ENCODE measurements at regions of chr1 and their contacts with region 1.

Region 1: DNA sequence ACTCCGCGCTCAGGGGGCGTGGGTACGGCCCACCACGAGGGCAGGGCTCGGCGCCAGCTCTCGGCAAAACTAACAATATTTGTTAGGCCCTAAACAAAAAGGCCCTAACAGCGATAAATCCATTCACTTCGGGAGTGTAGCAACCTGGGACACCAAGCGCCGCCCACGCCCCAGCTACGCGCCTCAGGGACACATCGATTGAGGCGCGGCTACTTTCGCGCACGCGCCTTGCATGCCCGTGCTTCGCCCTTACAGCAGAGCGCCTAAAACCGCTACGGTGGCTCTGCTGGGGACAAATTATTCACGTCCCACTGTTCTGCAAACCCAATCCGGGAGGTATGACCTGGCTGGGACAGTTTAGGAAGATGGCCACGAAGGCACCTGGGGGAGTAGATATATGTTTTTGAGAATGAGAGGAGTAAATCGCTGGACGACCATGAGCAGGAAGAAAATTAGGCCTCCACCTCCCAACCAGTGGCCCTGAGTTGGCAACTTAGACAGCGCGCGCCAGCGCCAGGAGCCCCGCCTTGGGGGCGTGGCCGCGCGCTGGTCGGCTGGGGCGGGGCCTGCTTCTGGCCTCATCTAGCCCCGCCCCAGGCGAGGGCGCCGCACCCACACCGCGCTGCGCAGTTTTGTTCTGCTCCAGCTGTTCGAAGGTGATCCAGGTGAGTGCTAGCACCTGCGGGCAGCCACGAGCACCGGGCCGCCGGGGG is at the start of gene MGST3:
- DNase-seq: peak; percentile 95 to 98 (median 96)
- H3K4me3 ChIP-seq: peak within 1 kb of the TSS; percentile 70 to 98 (median 84)
- H3K27ac ChIP-seq: peak within 1 kb of the TSS; percentile 87 to 97 (median 94)
- H3K4me1 ChIP-seq: peaks cover 19 to 29% of the 10 kb centered on the region in 2 donors
- H3K27me3 ChIP-seq: no peaks in the 10 kb centered on the region
- CTCF ChIP-seq: no peak
- POLR2A ChIP-seq: peak; percentile 62 to 91
- total RNA-seq, gene MGST3: 193 to 441 (median 254) TPM

Region 2: GRCh38 chr1:165444897-165445370 is 185.9 kb before region 1 on chr1 and contains the start of gene RXRG:
- intact Hi-C with region 1: no loop called
- DNase-seq: peak in 5 of 7 donors; percentile 9 to 60 (median 26)
- H3K4me3 ChIP-seq: peak within 1 kb of the TSS in 1 of 4 donors; percentile 21
- H3K27ac ChIP-seq: no peak within 1 kb of the TSS
- H3K4me1 ChIP-seq: peaks cover 0 to 6% of the 10 kb centered on the region in 2 donors
- H3K27me3 ChIP-seq: peaks cover 19% of the 10 kb centered on the region
- CTCF ChIP-seq: no peak
- POLR2A ChIP-seq: no peak
- total RNA-seq, gene RXRG: 0.17 to 2.4 (median 1.2) TPM in 7 of 9 donors, not detected in the others

Region 3: GRCh38 chr1:165686121-165686970 is 55.6 kb after region 1 on chr1:
- intact Hi-C with region 1: loop called (anchors 10 kb)
- DNase-seq: no peak
- H3K4me3 ChIP-seq: no peak overlapping the region
- H3K27ac ChIP-seq: no peak overlapping the region
- H3K4me1 ChIP-seq: peaks cover 13 to 56% of the 10 kb centered on the region in 2 donors
- H3K27me3 ChIP-seq: no peaks in the 10 kb centered on the region
- CTCF ChIP-seq: no peak
- POLR2A ChIP-seq: no peak

Region 4: DNA sequence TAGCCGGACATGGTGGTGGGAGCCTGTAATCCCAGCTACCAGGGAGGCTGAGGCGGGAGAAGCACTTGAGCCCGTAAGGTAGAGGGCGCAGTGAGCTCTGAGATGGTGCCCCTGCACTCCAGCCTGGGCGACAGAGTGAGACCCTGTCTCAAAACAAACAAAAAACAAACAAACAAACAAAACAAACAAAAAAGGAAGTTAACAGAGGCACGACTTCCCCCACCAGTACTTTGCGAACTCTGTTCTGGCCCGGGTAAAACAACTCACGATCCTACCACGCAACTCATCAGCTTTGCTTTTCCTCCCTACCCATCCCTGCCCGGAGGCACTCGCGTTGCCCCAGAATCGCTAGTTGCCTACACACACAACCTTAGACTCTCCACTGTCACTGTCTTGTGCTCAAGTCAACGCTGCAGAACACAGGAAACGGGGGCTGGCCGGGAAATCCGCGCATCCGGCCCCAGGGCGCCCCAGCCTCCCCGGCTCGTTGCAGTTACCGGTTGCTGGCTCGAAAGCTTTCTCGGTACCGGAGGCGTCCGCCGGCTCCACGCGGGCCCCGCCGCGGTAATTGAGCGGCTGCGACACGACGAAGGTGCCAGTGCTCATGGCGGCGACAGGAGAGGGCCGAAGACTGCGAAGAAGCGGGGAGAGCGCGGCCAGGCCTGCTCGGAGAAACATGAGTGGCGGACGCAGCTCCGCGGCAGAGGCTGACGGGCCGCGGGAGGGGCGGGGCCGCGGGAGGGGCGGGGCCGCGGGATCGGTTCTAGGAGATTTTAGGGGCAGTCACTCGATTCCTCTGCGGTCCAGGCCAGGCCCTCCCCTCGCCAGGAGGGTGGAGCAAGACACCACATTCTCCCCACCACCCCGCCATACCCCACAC is 67.3 kb after region 1 on chr1 and contains the start of gene ALDH9A1:
- intact Hi-C with region 1: loop called in 1 of 2 experiments (anchors 10 kb)
- DNase-seq: peak; percentile 87 to 95 (median 91)
- H3K4me3 ChIP-seq: peak within 1 kb of the TSS; percentile 65 to 97 (median 79)
- H3K27ac ChIP-seq: peak within 1 kb of the TSS; percentile 88 to 98 (median 95)
- H3K4me1 ChIP-seq: peaks cover 18 to 34% of the 10 kb centered on the region in 2 donors
- H3K27me3 ChIP-seq: no peaks in the 10 kb centered on the region
- CTCF ChIP-seq: peak in 3 of 6 experiments; percentile 27 to 33 (median 31)
- POLR2A ChIP-seq: peak; percentile 88 to 94
- total RNA-seq, gene ALDH9A1: 127 to 269 (median 173) TPM

Measured in adrenal gland (tissue), 19 donors.